Activated CD4-positive, alpha-beta T cell treated with anti-CD3 and anti-CD28 coated beads for 36 hours (primary cell): ENCODE measurements at regions of chr10 and their contacts with region 1.

Region 1: GRCh38 chr10:43138021-43138756 is at the start of gene CSGALNACT2:
- DNase-seq: peak; percentile 94
- ATAC-seq: peak; percentile 69
- H3K4me3 Mint-ChIP-seq: peak within 1 kb of the TSS; percentile 95
- H3K27ac Mint-ChIP-seq: peak within 1 kb of the TSS; percentile 98
- H3K4me1 Mint-ChIP-seq: peaks cover 48% of the 10 kb centered on the region
- H3K27me3 Mint-ChIP-seq: no peaks in the 10 kb centered on the region
- total RNA-seq, gene CSGALNACT2: 19.3 to 19.5 TPM

Region 2: GRCh38 chr10:42552493-42553407 is 585.4 kb before region 1 on chr10:
- CTCF ChIA-PET with region 1: no interaction called
- POLR2A ChIA-PET with region 1: no interaction called
- intact Hi-C with region 1: loop called in 1 of 2 experiments (anchors 2 kb)
- DNase-seq: peak; percentile 97
- ATAC-seq: peak; percentile 97
- H3K4me3 Mint-ChIP-seq: peak overlapping the region; percentile 94
- H3K27ac Mint-ChIP-seq: peak overlapping the region; percentile 94
- H3K4me1 Mint-ChIP-seq: peaks cover 33% of the 10 kb centered on the region
- H3K27me3 Mint-ChIP-seq: no peaks in the 10 kb centered on the region

Region 3: GRCh38 chr10:42801135-42801534 is 337.1 kb before region 1 on chr10:
- CTCF ChIA-PET with region 1: no interaction called
- POLR2A ChIA-PET with region 1: no interaction called
- intact Hi-C with region 1: loop called in 1 of 2 experiments (anchors 1 kb)
- DNase-seq: peak; percentile 24
- ATAC-seq: peak; percentile 94
- H3K4me3 Mint-ChIP-seq: no peak overlapping the region
- H3K27ac Mint-ChIP-seq: peak overlapping the region; percentile 89
- H3K4me1 Mint-ChIP-seq: peaks cover 31% of the 10 kb centered on the region
- H3K27me3 Mint-ChIP-seq: no peaks in the 10 kb centered on the region

Region 4: GRCh38 chr10:43204943-43205671 is 66.9 kb after region 1 on chr10:
- CTCF ChIA-PET with region 1: interaction called, 6 read pairs
- POLR2A ChIA-PET with region 1: interaction called, 6 read pairs
- intact Hi-C with region 1: loop called (anchors 2 to 5 kb)
- DNase-seq: peak; percentile 84
- ATAC-seq: peak; percentile 76
- H3K4me3 Mint-ChIP-seq: no peak overlapping the region
- H3K27ac Mint-ChIP-seq: no peak overlapping the region
- H3K4me1 Mint-ChIP-seq: peaks cover 4% of the 10 kb centered on the region
- H3K27me3 Mint-ChIP-seq: no peaks in the 10 kb centered on the region

Region 5: GRCh38 chr10:43396928-43397624 is 258.9 kb after region 1 on chr10:
- CTCF ChIA-PET with region 1: no interaction called
- POLR2A ChIA-PET with region 1: interaction called, 6 read pairs
- intact Hi-C with region 1: loop called (anchors 1 to 5 kb)
- DNase-seq: peak; percentile 93
- ATAC-seq: peak; percentile 72
- H3K4me3 Mint-ChIP-seq: peak overlapping the region; percentile 99
- H3K27ac Mint-ChIP-seq: peak overlapping the region; percentile 96
- H3K4me1 Mint-ChIP-seq: peaks cover 63% of the 10 kb centered on the region
- H3K27me3 Mint-ChIP-seq: no peaks in the 10 kb centered on the region

Region 6: GRCh38 chr10:43574001-43574892 is 436.1 kb after region 1 on chr10 and contains the start of gene ZNF239:
- CTCF ChIA-PET with region 1: no interaction called
- POLR2A ChIA-PET with region 1: no interaction called
- intact Hi-C with region 1: loop called in 1 of 2 experiments (anchors 5 kb)
- DNase-seq: peak; percentile 90
- ATAC-seq: peak; percentile 92
- H3K4me3 Mint-ChIP-seq: peak within 1 kb of the TSS; percentile 70
- H3K27ac Mint-ChIP-seq: peak within 1 kb of the TSS; percentile 82
- H3K4me1 Mint-ChIP-seq: peaks cover 51% of the 10 kb centered on the region
- H3K27me3 Mint-ChIP-seq: no peaks in the 10 kb centered on the region
- total RNA-seq, gene ZNF239: 2.4 to 2.7 TPM

Region 7: DNA sequence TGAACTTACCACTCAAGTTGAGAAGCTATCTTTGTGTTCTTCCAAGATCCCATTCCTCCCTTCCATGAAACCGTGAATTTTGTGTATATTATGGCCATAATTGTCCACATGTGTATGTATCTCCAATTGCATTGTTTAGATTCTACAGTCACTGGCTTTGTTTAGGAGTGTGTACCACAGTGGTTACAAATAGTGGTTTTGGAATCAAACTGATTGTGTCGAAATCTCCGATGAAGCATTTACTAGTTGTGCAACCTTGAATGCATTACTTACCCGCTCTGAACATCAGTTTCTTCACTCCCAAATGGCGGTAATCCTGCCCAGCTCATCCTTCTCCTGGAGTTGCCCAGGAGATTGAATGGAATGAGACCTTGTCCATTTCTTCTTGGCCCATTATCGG is 655.5 kb after region 1 on chr10:
- CTCF ChIA-PET with region 1: no interaction called
- POLR2A ChIA-PET with region 1: no interaction called
- intact Hi-C with region 1: no loop called
- DNase-seq: no peak
- ATAC-seq: no peak
- H3K4me3 Mint-ChIP-seq: no peak overlapping the region
- H3K27ac Mint-ChIP-seq: no peak overlapping the region
- H3K4me1 Mint-ChIP-seq: no peaks in the 10 kb centered on the region
- H3K27me3 Mint-ChIP-seq: peaks cover 4% of the 10 kb centered on the region